Endothelial cell of umbilical vein (primary cell): ENCODE measurements at regions of chr11 and their contacts with region 1.

Region 1: GRCh38 chr11:47766305-47767227 is 575 bp downstream of the FNBP4 start:
- DNase-seq: peak; percentile 73
- H3K4me3 ChIP-seq: peak overlapping the region; percentile 61 to 97 (median 62)
- H3K27ac ChIP-seq: peak overlapping the region; percentile 81
- H3K4me1 ChIP-seq: peaks cover 14% of the 10 kb centered on the region
- H3K27me3 ChIP-seq: no peaks in the 10 kb centered on the region
- CTCF ChIP-seq: no peak
- POLR2A ChIP-seq: no peak

Region 2: GRCh38 chr11:47847892-47848635 is 81.5 kb after region 1 on chr11 and contains the start of gene NUP160:
- CTCF ChIA-PET with region 1: no interaction called
- POLR2A ChIA-PET with region 1: no interaction called
- dilution Hi-C with region 1: no loop called
- intact Hi-C with region 1: loop called (anchors 1 kb)
- DNase-seq: peak; percentile 74
- H3K4me3 ChIP-seq: peak within 1 kb of the TSS; percentile 9 to 88 (median 68)
- H3K27ac ChIP-seq: peak within 1 kb of the TSS; percentile 56
- H3K4me1 ChIP-seq: peaks cover 10% of the 10 kb centered on the region
- H3K27me3 ChIP-seq: no peaks in the 10 kb centered on the region
- CTCF ChIP-seq: no peak
- POLR2A ChIP-seq: peak; percentile 94
- total RNA-seq, gene NUP160: 35.1 and 39.6 TPM in 2 replicates

Region 3: DNA sequence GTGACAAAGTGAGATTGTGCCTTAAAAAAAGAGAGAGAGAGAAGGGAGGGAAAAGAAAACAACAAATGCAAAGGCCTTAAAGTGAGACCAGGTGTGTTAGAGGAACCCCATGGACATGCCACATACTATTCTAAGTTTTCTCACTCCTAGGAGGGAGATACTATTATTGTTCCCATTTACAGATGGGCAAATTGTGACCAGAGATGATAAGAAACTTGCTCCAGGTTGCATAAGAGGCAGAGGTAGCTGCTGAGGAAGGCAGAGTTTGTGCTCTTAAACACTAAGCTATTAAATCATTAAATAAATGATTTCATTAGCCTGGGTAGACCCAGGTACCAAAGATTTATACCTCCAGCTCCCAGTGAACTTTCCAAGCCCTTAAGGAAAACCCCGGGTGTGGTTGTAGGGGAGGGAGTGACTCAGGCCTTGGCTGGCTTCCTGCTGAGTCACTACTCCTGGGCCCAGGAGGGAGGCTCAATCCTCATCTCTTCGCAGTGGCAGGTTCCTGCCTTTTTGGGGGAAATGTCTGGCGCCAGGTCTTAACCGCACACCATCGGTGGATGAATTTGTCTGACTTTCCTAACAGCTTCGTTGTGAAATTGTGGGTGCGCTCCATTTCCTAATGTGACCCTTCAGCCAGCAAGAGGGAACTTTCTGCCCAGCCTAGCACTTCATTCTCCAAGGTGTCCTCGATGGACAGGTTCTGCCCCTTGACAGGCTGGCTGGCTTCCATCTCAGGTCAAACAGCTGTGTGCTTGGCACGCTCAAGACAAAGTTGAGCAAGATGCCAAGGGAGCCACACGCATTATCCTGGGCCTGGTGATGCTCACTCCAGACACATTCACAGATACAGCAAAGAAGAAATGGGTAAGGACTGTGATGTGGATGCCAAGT is 180.4 kb after region 1 on chr11:
- CTCF ChIA-PET with region 1: no interaction called
- POLR2A ChIA-PET with region 1: no interaction called
- dilution Hi-C with region 1: no loop called
- intact Hi-C with region 1: no loop called
- DNase-seq: peak; percentile 88
- H3K4me3 ChIP-seq: no peak overlapping the region
- H3K27ac ChIP-seq: peak overlapping the region; percentile 60
- H3K4me1 ChIP-seq: peaks cover 10% of the 10 kb centered on the region
- H3K27me3 ChIP-seq: no peaks in the 10 kb centered on the region
- CTCF ChIP-seq: no peak
- POLR2A ChIP-seq: no peak

Region 4: GRCh38 chr11:48193876-48194275 is 427.3 kb after region 1 on chr11:
- CTCF ChIA-PET with region 1: no interaction called
- POLR2A ChIA-PET with region 1: no interaction called
- dilution Hi-C with region 1: no loop called
- intact Hi-C with region 1: no loop called
- DNase-seq: no peak
- H3K4me3 ChIP-seq: no peak overlapping the region
- H3K27ac ChIP-seq: no peak overlapping the region
- H3K4me1 ChIP-seq: no peaks in the 10 kb centered on the region
- H3K27me3 ChIP-seq: no peaks in the 10 kb centered on the region
- CTCF ChIP-seq: no peak
- POLR2A ChIP-seq: no peak